ENCODE measurements at regions of chr5 and their contacts with region 1.

Region 1: DNA sequence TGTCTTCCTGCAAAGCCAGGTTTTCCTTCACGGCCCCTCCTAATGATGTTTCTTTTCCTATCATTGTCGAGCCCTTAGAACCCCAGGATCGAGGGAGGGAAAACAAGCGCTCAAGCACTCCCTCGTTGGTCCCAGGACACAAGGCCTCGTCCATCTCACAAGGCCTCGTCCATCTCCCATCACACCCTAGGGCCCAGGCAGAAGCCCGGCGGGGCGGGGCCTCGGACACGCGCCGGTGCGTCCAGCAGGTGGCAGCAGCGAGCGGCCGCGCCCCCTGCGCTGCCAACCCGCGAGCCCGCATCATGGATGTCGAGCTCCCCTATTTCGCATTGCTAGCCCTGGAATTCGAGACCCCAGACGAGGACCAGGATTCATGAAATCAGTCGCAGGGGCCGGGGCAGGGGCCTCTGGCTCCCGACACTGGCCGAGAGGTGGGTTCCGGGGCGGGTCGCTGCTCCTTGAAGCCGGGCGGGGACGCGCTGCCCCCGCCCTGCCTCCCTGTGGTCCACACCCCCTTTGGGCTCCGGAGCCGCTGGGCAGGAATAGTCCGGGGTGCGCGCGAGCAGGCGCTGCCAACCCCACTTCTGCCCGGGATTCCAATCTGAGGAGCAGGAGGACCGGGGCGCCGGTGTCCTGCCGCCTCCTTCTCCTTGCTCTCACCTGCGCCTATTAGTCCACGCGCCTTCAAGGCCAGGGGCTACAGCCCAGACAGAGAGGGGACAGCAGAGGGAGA is at the start of gene ABLIM3:
- DNase-seq: peak in 1 of 2 experiments; percentile 80
- H3K4me3 ChIP-seq: peak within 1 kb of the TSS; percentile 45
- H3K4me3 Mint-ChIP-seq: peak within 1 kb of the TSS; percentile 43
- H3K27ac Mint-ChIP-seq: no peak within 1 kb of the TSS
- H3K4me1 ChIP-seq: no peaks in the 10 kb centered on the region
- H3K4me1 Mint-ChIP-seq: no peaks in the 10 kb centered on the region
- H3K27me3 ChIP-seq: peaks cover 3% of the 10 kb centered on the region; the same call in 1 of the 2 replicates
- H3K27me3 Mint-ChIP-seq: peaks cover 10% of the 10 kb centered on the region
- CTCF ChIP-seq: peak; percentile 71 to 91
- total RNA-seq, gene ABLIM3: not detected in 2 replicates

Region 2: DNA sequence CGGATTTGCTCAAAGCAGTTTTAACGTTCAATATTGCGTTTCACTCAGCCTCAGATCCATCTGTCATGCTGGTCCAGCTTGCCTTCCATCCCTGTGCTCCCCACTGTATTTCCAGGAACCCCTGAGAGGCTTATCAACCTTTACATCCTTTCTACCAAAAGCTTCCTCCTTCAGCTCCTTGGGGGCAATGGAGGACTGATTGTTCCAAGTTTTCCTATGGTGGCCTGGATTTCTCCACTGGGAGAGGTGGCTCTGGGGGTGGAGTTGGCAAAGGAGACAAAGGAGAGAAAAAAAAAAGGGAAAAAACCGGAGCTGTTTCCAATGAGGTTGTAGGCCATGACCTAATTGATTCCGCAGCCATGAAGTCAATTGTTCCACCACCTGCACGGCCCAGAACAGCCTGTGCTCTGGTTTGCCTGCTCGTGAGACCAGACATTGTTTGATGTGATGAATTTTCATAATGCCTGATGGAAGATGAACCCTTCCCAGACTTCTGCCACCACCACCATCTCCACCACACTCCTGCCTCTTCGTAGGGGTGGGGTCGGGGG is 54.0 kb after region 1 on chr5:
- CTCF ChIA-PET with region 1: no interaction called
- POLR2A ChIA-PET with region 1: no interaction called
- intact Hi-C with region 1: loop called (anchors 5 kb)
- DNase-seq: no peak
- H3K4me3 ChIP-seq: no peak overlapping the region
- H3K4me3 Mint-ChIP-seq: no peak overlapping the region
- H3K27ac Mint-ChIP-seq: no peak overlapping the region
- H3K4me1 ChIP-seq: no peaks in the 10 kb centered on the region; the same call in 1 of the 2 replicates
- H3K4me1 Mint-ChIP-seq: no peaks in the 10 kb centered on the region
- H3K27me3 ChIP-seq: no peaks in the 10 kb centered on the region; the same call in 1 of the 2 replicates
- H3K27me3 Mint-ChIP-seq: peaks cover 4% of the 10 kb centered on the region
- CTCF ChIP-seq: no peak

Region 3: DNA sequence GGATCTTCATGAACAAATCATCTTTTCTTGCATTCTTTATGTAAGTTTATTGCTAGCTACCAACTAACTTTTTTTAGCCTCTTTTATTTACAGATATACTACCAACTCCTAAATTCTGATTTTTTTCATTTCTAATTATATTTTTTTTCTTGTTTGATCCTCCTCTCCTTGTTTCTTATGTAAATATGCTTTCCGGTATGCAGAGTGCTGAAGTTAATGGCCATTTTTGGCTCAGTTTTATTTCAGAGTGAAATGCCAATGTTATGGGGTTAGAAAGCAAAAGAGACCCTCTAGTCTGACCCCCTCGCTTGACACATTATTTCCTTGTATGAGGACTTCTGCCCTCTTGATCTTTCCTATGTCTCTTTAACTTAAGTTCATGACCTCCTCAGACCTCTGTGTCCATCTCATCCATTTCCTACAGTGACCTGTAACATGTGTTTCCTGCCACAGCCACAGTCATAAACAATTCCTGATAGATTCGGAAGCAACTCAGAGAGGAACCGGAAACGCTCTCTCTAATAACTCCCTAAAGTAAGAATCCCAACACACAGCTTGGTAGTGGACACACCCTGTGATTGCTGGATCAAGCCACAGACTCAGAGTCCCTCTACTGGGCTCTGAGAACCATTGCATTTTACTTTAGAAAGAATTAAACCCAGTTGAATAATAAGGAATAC is 87.4 kb after region 1 on chr5:
- CTCF ChIA-PET with region 1: interaction called, 15 read pairs
- POLR2A ChIA-PET with region 1: no interaction called
- intact Hi-C with region 1: loop called (anchors 1 kb)
- DNase-seq: peak in 1 of 2 experiments; percentile 16
- H3K4me3 ChIP-seq: no peak overlapping the region
- H3K4me3 Mint-ChIP-seq: no peak overlapping the region
- H3K27ac Mint-ChIP-seq: no peak overlapping the region
- H3K4me1 ChIP-seq: no peaks in the 10 kb centered on the region
- H3K4me1 Mint-ChIP-seq: peaks cover 6% of the 10 kb centered on the region
- H3K27me3 ChIP-seq: no peaks in the 10 kb centered on the region; the same call in 1 of the 2 replicates
- H3K27me3 Mint-ChIP-seq: peaks cover 22% of the 10 kb centered on the region
- CTCF ChIP-seq: peak; percentile 59 to 60

Region 4: GRCh38 chr5:149268928-149269557 is 127.7 kb after region 1 on chr5:
- CTCF ChIA-PET with region 1: interaction called, 5 read pairs
- POLR2A ChIA-PET with region 1: no interaction called
- intact Hi-C with region 1: loop called (anchors 1 kb)
- DNase-seq: peak in 1 of 2 experiments; percentile 47
- H3K4me3 ChIP-seq: no peak overlapping the region
- H3K4me3 Mint-ChIP-seq: no peak overlapping the region
- H3K27ac Mint-ChIP-seq: no peak overlapping the region
- H3K4me1 ChIP-seq: 0 out of 2 replicates have a peak, but pooled peaks cover 7% of the 10 kb centered on the region
- H3K4me1 Mint-ChIP-seq: peaks cover 7% of the 10 kb centered on the region
- H3K27me3 ChIP-seq: no peaks in the 10 kb centered on the region; the same call in 1 of the 2 replicates
- H3K27me3 Mint-ChIP-seq: peaks cover 9% of the 10 kb centered on the region
- CTCF ChIP-seq: peak; percentile 53 to 79

Measured in Caco-2 (cell line).